H1 (cell line): ENCODE measurements at regions of chr19 and their contacts with region 1.

Region 1: GRCh38 chr19:41409288-41409687 is 11.7 kb downstream of the BCKDHA start:
- DNase-seq: no peak
- H3K4me3 ChIP-seq: no peak overlapping the region
- H3K27ac ChIP-seq: no peak overlapping the region
- H3K4me1 ChIP-seq: peaks cover 0 to 5% (median 1%) of the 10 kb centered on the region in 4 experiments; a peak in 5 of 7 replicates
- H3K27me3 ChIP-seq: no peaks in the 10 kb centered on the region; a peak in 1 of 7 replicates
- CTCF ChIP-seq: no peak
- EP300 ChIP-seq: no peak
- POLR2A ChIP-seq: no peak
- RAD21 ChIP-seq: no peak

Region 2: GRCh38 chr19:41420101-41420880 is 11.0 kb after region 1 on chr19:
- CTCF ChIA-PET with region 1: interaction called, 10 read pairs
- POLR2A ChIA-PET with region 1: interaction called, 9 read pairs
- DNase-seq: no peak
- H3K4me3 ChIP-seq: no peak overlapping the region
- H3K27ac ChIP-seq: no peak overlapping the region
- H3K4me1 ChIP-seq: no peaks in the 10 kb centered on the region
- H3K27me3 ChIP-seq: no peaks in the 10 kb centered on the region
- CTCF ChIP-seq: no peak
- EP300 ChIP-seq: no peak
- POLR2A ChIP-seq: no peak
- RAD21 ChIP-seq: no peak

Region 3: DNA sequence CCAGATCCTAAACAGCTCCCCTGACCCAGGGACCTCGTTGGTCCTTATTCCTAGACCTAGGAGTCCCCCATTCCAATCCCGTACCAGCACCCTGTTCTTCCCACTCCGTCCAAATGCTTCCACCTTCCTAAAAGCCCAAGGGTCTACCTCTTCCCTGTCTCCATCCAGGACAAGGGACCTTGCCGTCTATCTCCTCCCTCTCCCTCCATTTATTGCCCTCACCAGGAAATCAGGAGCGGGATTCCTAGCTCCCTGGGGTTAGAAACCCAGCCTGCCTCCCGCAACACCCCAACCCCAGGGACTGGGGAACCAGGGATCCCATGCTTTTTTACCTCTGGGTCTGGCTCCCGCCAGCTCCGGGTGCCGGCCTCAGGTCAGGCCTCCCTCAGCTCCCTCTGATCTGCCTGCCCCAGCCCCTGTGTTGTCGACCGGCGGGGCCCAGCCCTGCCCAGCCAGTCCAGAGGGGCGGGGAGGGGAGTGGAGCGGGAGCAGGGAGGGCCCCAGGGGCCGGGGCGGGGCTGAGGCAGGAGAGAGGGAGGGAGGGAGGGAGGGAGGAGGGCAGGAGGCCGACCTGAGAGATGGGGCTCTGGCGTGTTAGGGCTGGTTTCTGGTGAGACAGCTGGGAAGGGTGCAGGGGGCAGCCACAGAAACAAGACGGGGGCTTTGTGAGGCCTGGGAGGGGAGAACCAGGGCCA is 17.8 kb after region 1 on chr19 and contains the start of gene B3GNT8:
- CTCF ChIA-PET with region 1: interaction called, 34 read pairs
- POLR2A ChIA-PET with region 1: interaction called, 8 read pairs
- DNase-seq: peak; percentile 56 to 88
- H3K4me3 ChIP-seq: peak within 1 kb of the TSS; percentile 40 to 77 (median 54); a peak in 7 of 8 replicates
- H3K27ac ChIP-seq: peak within 1 kb of the TSS; percentile 47; the same call in 1 of the 2 replicates
- H3K4me1 ChIP-seq: peaks cover 0 to 18% (median 4%) of the 10 kb centered on the region in 4 experiments; a peak in 5 of 7 replicates
- H3K27me3 ChIP-seq: no peaks in the 10 kb centered on the region
- CTCF ChIP-seq: no peak
- EP300 ChIP-seq: no peak
- POLR2A ChIP-seq: no peak; a peak in 1 of 3 replicates
- RAD21 ChIP-seq: no peak
- total RNA-seq, gene B3GNT8: 0.86 and 1.6 TPM in 2 replicates

Region 4: GRCh38 chr19:41457241-41457640 is 48.0 kb after region 1 on chr19:
- CTCF ChIA-PET with region 1: no interaction called
- POLR2A ChIA-PET with region 1: no interaction called
- DNase-seq: no peak
- H3K4me3 ChIP-seq: no peak overlapping the region
- H3K27ac ChIP-seq: no peak overlapping the region
- H3K4me1 ChIP-seq: no peaks in the 10 kb centered on the region
- H3K27me3 ChIP-seq: no peaks in the 10 kb centered on the region
- CTCF ChIP-seq: no peak
- EP300 ChIP-seq: no peak
- POLR2A ChIP-seq: no peak
- RAD21 ChIP-seq: no peak